Gastrocnemius medialis (tissue), 4 donors: ENCODE measurements at regions of chr1 and their contacts with region 1.

Region 1: GRCh38 chr1:43073490-43074230 is 98.4 kb downstream of the EBNA1BP2 start:
- DNase-seq: peak; percentile 47 to 50
- ATAC-seq: peak; percentile 63 to 85
- H3K4me3 ChIP-seq: no peak overlapping the region
- H3K27ac ChIP-seq: no peak overlapping the region
- H3K4me1 ChIP-seq: no peaks in the 10 kb centered on the region
- H3K27me3 ChIP-seq: peaks cover 3 to 4% (median 4%) of the 10 kb centered on the region in 3 donors
- CTCF ChIP-seq: peak; percentile 78 to 89 (median 85)
- POLR2A ChIP-seq: no peak

Region 2: GRCh38 chr1:42146626-42147320 is 926.9 kb before region 1 on chr1:
- in situ Hi-C with region 1: loop called in 1 of 4 experiments (anchors 25 kb)
- intact Hi-C with region 1: loop called (anchors 10 kb)
- DNase-seq: peak in 1 of 2 donors; percentile 28
- ATAC-seq: peak in 1 of 2 donors; percentile 65
- H3K4me3 ChIP-seq: no peak overlapping the region
- H3K27ac ChIP-seq: no peak overlapping the region
- H3K4me1 ChIP-seq: no peaks in the 10 kb centered on the region
- H3K27me3 ChIP-seq: peaks cover 7 to 22% (median 21%) of the 10 kb centered on the region in 3 donors
- CTCF ChIP-seq: peak; percentile 68 to 85 (median 73)
- POLR2A ChIP-seq: no peak

Region 3: GRCh38 chr1:42576935-42577334 is 496.7 kb before region 1 on chr1:
- in situ Hi-C with region 1: loop called in 3 of 4 experiments (anchors 10 to 25 kb)
- intact Hi-C with region 1: no loop called
- DNase-seq: no peak
- ATAC-seq: no peak
- H3K4me3 ChIP-seq: no peak overlapping the region
- H3K27ac ChIP-seq: no peak overlapping the region
- H3K4me1 ChIP-seq: no peaks in the 10 kb centered on the region
- H3K27me3 ChIP-seq: no peaks in the 10 kb centered on the region
- CTCF ChIP-seq: no peak
- POLR2A ChIP-seq: no peak

Region 4: DNA sequence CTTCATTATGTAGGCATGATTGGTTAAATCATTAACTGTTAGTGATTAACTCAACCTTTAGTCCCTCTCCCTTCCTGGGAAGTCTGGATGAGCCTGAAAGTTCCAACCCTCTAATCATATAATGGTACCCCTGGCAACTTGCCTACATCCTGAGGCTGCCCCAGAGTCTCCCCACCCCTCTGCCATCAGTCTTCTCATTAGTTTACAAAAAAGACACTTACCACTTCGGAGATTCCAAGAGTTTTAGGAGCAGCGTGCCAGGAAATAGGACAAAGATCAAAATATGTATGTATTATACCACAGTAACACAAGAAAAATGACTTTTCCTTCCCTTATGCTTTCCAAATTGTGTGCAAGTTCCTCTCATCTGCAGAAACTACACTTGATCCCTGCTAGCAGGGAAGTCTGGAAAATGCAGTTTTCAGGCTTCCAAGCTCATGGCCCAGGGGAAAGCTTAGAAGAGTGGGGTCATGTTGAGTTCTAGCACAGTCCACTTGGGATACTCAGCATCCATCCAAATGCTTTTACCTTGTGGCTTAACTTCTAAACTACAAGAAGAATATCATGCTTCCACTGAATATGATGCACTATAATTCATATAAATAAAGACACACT is 480.1 kb before region 1 on chr1:
- in situ Hi-C with region 1: loop called in 2 of 4 experiments (anchors 25 kb)
- intact Hi-C with region 1: no loop called
- DNase-seq: no peak
- ATAC-seq: no peak
- H3K4me3 ChIP-seq: no peak overlapping the region
- H3K27ac ChIP-seq: no peak overlapping the region
- H3K4me1 ChIP-seq: no peaks in the 10 kb centered on the region
- H3K27me3 ChIP-seq: no peaks in the 10 kb centered on the region
- CTCF ChIP-seq: no peak
- POLR2A ChIP-seq: no peak

Region 5: GRCh38 chr1:42777852-42778251 is 295.8 kb before region 1 on chr1:
- in situ Hi-C with region 1: loop called (anchors 10 to 25 kb)
- intact Hi-C with region 1: loop called (anchors 1 kb)
- DNase-seq: no peak
- ATAC-seq: no peak
- H3K4me3 ChIP-seq: no peak overlapping the region
- H3K27ac ChIP-seq: no peak overlapping the region
- H3K4me1 ChIP-seq: no peaks in the 10 kb centered on the region
- H3K27me3 ChIP-seq: no peaks in the 10 kb centered on the region
- CTCF ChIP-seq: peak in 4 of 5 experiments; percentile 25 to 48 (median 39)
- POLR2A ChIP-seq: no peak

Region 6: GRCh38 chr1:42908046-42908445 is 165.6 kb before region 1 on chr1:
- in situ Hi-C with region 1: loop called in 3 of 4 experiments (anchors 5 kb)
- intact Hi-C with region 1: loop called (anchors 1 kb)
- DNase-seq: no peak
- ATAC-seq: no peak
- H3K4me3 ChIP-seq: no peak overlapping the region
- H3K27ac ChIP-seq: no peak overlapping the region
- H3K4me1 ChIP-seq: no peaks in the 10 kb centered on the region
- H3K27me3 ChIP-seq: no peaks in the 10 kb centered on the region
- CTCF ChIP-seq: no peak
- POLR2A ChIP-seq: no peak

Region 7: GRCh38 chr1:42913426-42914091 is 160.1 kb before region 1 on chr1:
- in situ Hi-C with region 1: loop called in 3 of 4 experiments (anchors 5 kb)
- intact Hi-C with region 1: loop called (anchors 1 kb)
- DNase-seq: no peak
- ATAC-seq: peak; percentile 44 to 75
- H3K4me3 ChIP-seq: no peak overlapping the region
- H3K27ac ChIP-seq: no peak overlapping the region
- H3K4me1 ChIP-seq: no peaks in the 10 kb centered on the region
- H3K27me3 ChIP-seq: no peaks in the 10 kb centered on the region
- CTCF ChIP-seq: peak; percentile 55 to 80 (median 75)
- POLR2A ChIP-seq: no peak

Region 8: GRCh38 chr1:42958488-42959319 is 115.0 kb before region 1 on chr1 and contains the start of gene SLC2A1:
- in situ Hi-C with region 1: no loop called
- intact Hi-C with region 1: no loop called
- DNase-seq: peak; percentile 61
- ATAC-seq: peak; percentile 66 to 71
- H3K4me3 ChIP-seq: peak within 1 kb of the TSS; percentile 56 to 78 (median 63)
- H3K27ac ChIP-seq: peak within 1 kb of the TSS in 3 of 4 donors; percentile 31 to 55 (median 53)
- H3K4me1 ChIP-seq: peaks cover 5 to 9% of the 10 kb centered on the region in 2 donors
- H3K27me3 ChIP-seq: peaks cover 29 to 45% (median 35%) of the 10 kb centered on the region in 3 donors
- CTCF ChIP-seq: no peak
- POLR2A ChIP-seq: peak; percentile 44 to 62
- total RNA-seq, gene SLC2A1: 6.3 to 16.1 (median 9.4) TPM